Endothelial cell of umbilical vein (primary cell): ENCODE measurements at regions of chr14 and their contacts with region 1.

Region 1: DNA sequence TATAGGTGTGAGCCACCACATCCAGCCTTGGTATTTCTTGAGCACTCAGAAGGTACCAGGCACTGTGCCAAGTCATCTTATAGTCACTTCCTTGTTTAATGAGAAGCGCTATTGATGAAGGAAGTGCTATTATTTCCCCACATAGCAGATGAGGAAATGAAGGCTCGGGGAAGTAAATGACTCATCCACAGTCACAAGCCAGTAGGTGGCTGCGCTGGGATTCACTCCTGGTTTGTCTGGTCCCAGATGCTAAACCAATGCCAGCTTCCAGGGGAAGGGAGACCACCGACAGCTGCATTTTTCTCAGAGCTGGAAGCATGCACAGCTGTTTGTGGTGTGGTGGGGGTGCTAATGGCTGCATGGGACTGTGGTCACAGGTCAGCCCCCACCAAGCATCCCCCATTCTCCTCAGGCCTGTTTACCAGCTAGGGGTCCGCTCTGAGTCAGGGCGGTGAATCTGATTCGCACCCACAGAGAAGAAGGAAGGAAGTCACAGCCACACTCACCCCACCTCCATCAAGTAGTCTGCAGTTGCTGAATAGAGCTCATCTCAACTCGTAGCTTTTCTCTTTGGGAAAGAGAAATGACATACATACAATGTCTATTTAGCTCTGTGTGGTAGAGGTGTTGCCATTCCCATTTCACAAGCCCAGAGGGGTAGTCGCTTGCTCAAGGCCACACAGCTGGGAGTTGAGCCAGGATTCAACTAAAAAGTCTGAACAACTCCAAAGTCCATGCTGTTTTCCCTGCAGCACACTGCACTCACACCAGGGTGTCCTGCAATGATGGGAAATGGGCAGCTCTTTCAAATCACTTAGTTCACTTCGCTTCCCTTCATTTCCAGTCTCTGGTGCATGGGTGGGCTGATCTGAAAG is 6.3 kb upstream of the LTBP2 start:
- DNase-seq: peak; percentile 83
- H3K4me3 ChIP-seq: no peak overlapping the region
- H3K27ac ChIP-seq: peak overlapping the region; percentile 98
- H3K4me1 ChIP-seq: peaks cover 85% of the 10 kb centered on the region
- H3K27me3 ChIP-seq: no peaks in the 10 kb centered on the region
- CTCF ChIP-seq: no peak
- POLR2A ChIP-seq: peak; percentile 46

Region 2: DNA sequence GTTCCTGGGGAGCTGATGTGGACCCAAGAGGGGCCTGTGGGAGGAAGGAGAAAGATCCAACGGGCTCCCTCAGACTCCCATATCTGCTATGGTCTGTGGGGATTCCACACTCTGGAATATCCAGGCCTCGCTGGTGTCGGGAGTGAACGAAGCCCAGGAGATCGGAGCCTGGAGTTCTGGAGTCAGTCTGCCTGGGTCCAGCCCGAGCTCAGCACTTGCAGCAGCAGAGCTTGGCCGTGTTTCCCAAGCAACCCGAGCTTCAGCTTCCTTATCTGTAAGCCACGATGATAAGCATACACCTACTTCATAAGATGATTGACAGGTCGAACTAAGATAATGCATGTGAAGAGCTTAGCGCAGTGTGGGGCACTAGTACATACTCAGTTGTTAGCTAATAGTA is 16.3 kb before region 1 on chr14:
- CTCF ChIA-PET with region 1: no interaction called
- POLR2A ChIA-PET with region 1: no interaction called
- dilution Hi-C with region 1: no loop called
- intact Hi-C with region 1: no loop called
- DNase-seq: no peak
- H3K4me3 ChIP-seq: no peak overlapping the region
- H3K27ac ChIP-seq: no peak overlapping the region
- H3K4me1 ChIP-seq: no peaks in the 10 kb centered on the region
- H3K27me3 ChIP-seq: no peaks in the 10 kb centered on the region
- CTCF ChIP-seq: no peak
- POLR2A ChIP-seq: no peak

Region 3: DNA sequence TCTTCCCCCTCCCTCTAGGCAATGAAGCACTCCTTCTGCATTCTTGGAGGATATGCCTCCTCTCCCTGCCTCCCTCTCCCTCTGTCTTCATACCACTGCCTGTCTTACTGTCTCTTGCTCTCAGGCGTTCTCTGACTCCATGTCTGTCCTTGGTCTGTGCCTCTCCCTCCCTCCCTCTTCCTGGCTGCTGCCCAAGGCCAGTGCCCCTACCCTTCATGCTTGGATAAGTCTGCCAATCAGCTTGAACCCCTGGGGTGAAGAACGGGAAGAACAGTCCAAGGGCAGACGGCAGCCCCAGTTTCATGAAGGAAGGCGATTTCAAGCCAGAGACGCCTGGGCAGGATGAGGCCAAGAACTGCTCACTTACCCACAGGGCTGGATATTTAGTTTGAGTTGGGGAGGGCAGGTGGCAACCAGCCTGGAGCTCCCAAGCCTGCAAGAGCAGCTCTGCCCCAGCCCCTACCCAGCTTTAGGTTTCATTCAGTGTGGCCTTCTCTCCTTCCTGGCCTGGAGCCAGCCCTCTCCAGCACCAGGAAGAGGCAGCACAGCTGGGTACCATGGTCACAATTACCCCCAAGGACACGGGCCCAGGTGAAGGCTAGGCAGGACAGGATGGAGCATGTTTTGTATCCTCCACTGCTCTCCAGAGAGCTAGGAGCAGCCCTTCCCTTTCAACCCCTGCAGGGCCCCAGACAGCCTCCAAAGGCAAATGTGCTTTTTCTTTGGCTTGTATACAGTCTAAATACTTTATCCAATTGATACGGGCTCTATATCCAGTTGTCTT is 29.6 kb after region 1 on chr14:
- CTCF ChIA-PET with region 1: interaction called, 33 read pairs
- POLR2A ChIA-PET with region 1: interaction called, 5 read pairs
- dilution Hi-C with region 1: no loop called
- intact Hi-C with region 1: loop called (anchors 2 kb)
- DNase-seq: peak; percentile 29
- H3K4me3 ChIP-seq: no peak overlapping the region
- H3K27ac ChIP-seq: no peak overlapping the region
- H3K4me1 ChIP-seq: peaks cover 29% of the 10 kb centered on the region
- H3K27me3 ChIP-seq: no peaks in the 10 kb centered on the region
- CTCF ChIP-seq: no peak
- POLR2A ChIP-seq: no peak

Region 4: DNA sequence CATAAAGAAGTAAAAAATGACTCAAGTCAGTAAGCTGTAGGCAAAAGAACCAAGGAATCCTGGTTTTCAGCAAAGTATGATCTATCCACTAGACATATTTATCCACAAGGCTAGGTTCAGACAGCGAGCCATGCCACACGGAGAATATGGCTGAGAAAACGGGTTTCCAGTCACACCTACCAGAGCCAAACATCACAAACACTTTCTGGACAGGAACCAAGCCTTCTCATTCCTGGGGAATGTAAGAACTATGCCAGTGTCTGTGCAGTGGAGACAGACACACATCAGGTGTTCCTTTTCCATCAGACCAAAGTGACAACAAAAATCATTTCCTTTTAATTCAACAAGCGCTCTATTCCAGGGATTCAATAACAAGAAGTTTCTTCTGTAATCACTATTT is 53.5 kb after region 1 on chr14:
- CTCF ChIA-PET with region 1: interaction called, 24 read pairs
- POLR2A ChIA-PET with region 1: interaction called, 11 read pairs
- dilution Hi-C with region 1: no loop called
- intact Hi-C with region 1: loop called (anchors 1 kb)
- DNase-seq: peak; percentile 85
- H3K4me3 ChIP-seq: no peak overlapping the region
- H3K27ac ChIP-seq: peak overlapping the region; percentile 89
- H3K4me1 ChIP-seq: peaks cover 43% of the 10 kb centered on the region
- H3K27me3 ChIP-seq: no peaks in the 10 kb centered on the region
- CTCF ChIP-seq: no peak
- POLR2A ChIP-seq: no peak

Region 5: DNA sequence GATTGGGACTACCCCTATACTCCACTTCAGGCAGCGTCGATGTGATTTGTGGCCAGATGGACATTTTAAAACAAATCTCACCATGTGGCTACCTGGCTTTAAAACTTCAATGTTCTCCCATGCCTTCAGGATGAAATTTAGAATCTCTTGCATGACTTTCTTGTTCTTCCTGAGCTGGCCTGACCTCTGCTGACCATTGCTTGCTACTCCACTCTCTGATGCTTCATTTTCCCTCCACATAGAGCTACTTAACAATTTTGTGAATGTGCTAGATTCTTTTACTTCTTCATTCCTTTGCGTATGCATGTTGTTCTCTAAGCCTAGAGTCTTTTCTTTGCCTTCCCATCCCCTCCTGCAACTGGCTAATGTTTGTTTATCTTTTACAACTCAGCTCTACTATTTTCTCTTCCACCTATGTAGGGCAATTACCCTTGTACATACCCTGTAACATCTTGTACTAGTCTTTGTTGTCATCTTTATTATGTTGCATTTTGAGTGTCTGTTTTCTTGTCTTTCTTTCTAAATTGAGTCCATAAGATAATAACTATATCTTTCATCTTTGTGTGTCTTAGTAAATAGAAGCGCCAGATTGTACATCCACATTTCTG is 186.0 kb after region 1 on chr14:
- CTCF ChIA-PET with region 1: interaction called, 202 read pairs
- POLR2A ChIA-PET with region 1: no interaction called
- dilution Hi-C with region 1: no loop called
- intact Hi-C with region 1: no loop called
- DNase-seq: peak; percentile 76
- H3K4me3 ChIP-seq: no peak overlapping the region
- H3K27ac ChIP-seq: no peak overlapping the region
- H3K4me1 ChIP-seq: no peaks in the 10 kb centered on the region
- H3K27me3 ChIP-seq: no peaks in the 10 kb centered on the region
- CTCF ChIP-seq: peak; percentile 66 to 68
- POLR2A ChIP-seq: no peak